GM10248 (cell line): ENCODE measurements at regions of chr10 and their contacts with region 1.

Region 1: GRCh38 chr10:133224756-133225372 is 5.2 kb upstream of the UTF1 start:
- DNase-seq: no peak
- CTCF ChIP-seq: no peak

Region 2: GRCh38 chr10:133246236-133246626 is 21.4 kb after region 1 on chr10:
- CTCF ChIA-PET with region 1: no interaction called
- POLR2A ChIA-PET with region 1: interaction called, 15 read pairs
- DNase-seq: no peak
- CTCF ChIP-seq: no peak